ENCODE measurements at regions of chr3 and their contacts with region 1.

Region 1: GRCh38 chr3:45841757-45842491 is at the start of gene LZTFL1:
- DNase-seq: peak; percentile 96
- ATAC-seq: peak; percentile 90
- H3K4me3 ChIP-seq: peak within 1 kb of the TSS; percentile 65 to 95 (median 88)
- H3K4me3 Mint-ChIP-seq: peak within 1 kb of the TSS; percentile 98
- H3K27ac ChIP-seq: peak within 1 kb of the TSS; percentile 83 to 95
- H3K27ac Mint-ChIP-seq: peak within 1 kb of the TSS; percentile 97
- H3K4me1 ChIP-seq: peaks cover 12 to 16% of the 10 kb centered on the region in 2 donors
- H3K4me1 Mint-ChIP-seq: peaks cover 23% of the 10 kb centered on the region
- H3K27me3 ChIP-seq: no peaks in the 10 kb centered on the region
- H3K27me3 Mint-ChIP-seq: no peaks in the 10 kb centered on the region
- CTCF ChIP-seq: no peak
- total RNA-seq, gene LZTFL1: 17.8 and 18.4 TPM in 2 replicates

Region 2: GRCh38 chr3:45688882-45689756 is 152.8 kb before region 1 on chr3 and contains the start of gene SACM1L:
- CTCF ChIA-PET with region 1: no interaction called
- POLR2A ChIA-PET with region 1: no interaction called
- intact Hi-C with region 1: loop called (anchors 1 kb)
- DNase-seq: peak; percentile 99
- ATAC-seq: peak; percentile 85
- H3K4me3 ChIP-seq: peak within 1 kb of the TSS; percentile 69 to 96 (median 82)
- H3K4me3 Mint-ChIP-seq: peak within 1 kb of the TSS; percentile 93
- H3K27ac ChIP-seq: peak within 1 kb of the TSS; percentile 75 to 85
- H3K27ac Mint-ChIP-seq: peak within 1 kb of the TSS; percentile 99
- H3K4me1 ChIP-seq: peaks cover 38 to 44% of the 10 kb centered on the region in 2 donors
- H3K4me1 Mint-ChIP-seq: peaks cover 55% of the 10 kb centered on the region
- H3K27me3 ChIP-seq: no peaks in the 10 kb centered on the region
- H3K27me3 Mint-ChIP-seq: peaks cover 3% of the 10 kb centered on the region
- CTCF ChIP-seq: no peak
- total RNA-seq, gene SACM1L: 85.7 and 88.2 TPM in 2 replicates

Region 3: GRCh38 chr3:45890405-45890804 is 48.5 kb after region 1 on chr3:
- CTCF ChIA-PET with region 1: no interaction called
- POLR2A ChIA-PET with region 1: no interaction called
- intact Hi-C with region 1: loop called (anchors 5 kb)
- DNase-seq: peak; percentile 28
- ATAC-seq: no peak
- H3K4me3 ChIP-seq: peak overlapping the region in 1 of 5 experiments; percentile 13
- H3K4me3 Mint-ChIP-seq: peak overlapping the region; percentile 72
- H3K27ac ChIP-seq: peak overlapping the region; percentile 6 to 13
- H3K27ac Mint-ChIP-seq: no peak overlapping the region
- H3K4me1 ChIP-seq: peaks cover 52 to 63% of the 10 kb centered on the region in 2 donors
- H3K4me1 Mint-ChIP-seq: peaks cover 74% of the 10 kb centered on the region
- H3K27me3 ChIP-seq: no peaks in the 10 kb centered on the region
- H3K27me3 Mint-ChIP-seq: no peaks in the 10 kb centered on the region
- CTCF ChIP-seq: no peak

Region 4: GRCh38 chr3:45929042-45929679 is 87.2 kb after region 1 on chr3:
- CTCF ChIA-PET with region 1: no interaction called
- POLR2A ChIA-PET with region 1: no interaction called
- intact Hi-C with region 1: loop called (anchors 5 kb)
- DNase-seq: peak; percentile 70
- ATAC-seq: peak; percentile 81
- H3K4me3 ChIP-seq: no peak overlapping the region
- H3K4me3 Mint-ChIP-seq: no peak overlapping the region
- H3K27ac ChIP-seq: no peak overlapping the region
- H3K27ac Mint-ChIP-seq: no peak overlapping the region
- H3K4me1 ChIP-seq: no peaks in the 10 kb centered on the region
- H3K4me1 Mint-ChIP-seq: no peaks in the 10 kb centered on the region
- H3K27me3 ChIP-seq: no peaks in the 10 kb centered on the region
- H3K27me3 Mint-ChIP-seq: no peaks in the 10 kb centered on the region
- CTCF ChIP-seq: peak; percentile 81

Region 5: DNA sequence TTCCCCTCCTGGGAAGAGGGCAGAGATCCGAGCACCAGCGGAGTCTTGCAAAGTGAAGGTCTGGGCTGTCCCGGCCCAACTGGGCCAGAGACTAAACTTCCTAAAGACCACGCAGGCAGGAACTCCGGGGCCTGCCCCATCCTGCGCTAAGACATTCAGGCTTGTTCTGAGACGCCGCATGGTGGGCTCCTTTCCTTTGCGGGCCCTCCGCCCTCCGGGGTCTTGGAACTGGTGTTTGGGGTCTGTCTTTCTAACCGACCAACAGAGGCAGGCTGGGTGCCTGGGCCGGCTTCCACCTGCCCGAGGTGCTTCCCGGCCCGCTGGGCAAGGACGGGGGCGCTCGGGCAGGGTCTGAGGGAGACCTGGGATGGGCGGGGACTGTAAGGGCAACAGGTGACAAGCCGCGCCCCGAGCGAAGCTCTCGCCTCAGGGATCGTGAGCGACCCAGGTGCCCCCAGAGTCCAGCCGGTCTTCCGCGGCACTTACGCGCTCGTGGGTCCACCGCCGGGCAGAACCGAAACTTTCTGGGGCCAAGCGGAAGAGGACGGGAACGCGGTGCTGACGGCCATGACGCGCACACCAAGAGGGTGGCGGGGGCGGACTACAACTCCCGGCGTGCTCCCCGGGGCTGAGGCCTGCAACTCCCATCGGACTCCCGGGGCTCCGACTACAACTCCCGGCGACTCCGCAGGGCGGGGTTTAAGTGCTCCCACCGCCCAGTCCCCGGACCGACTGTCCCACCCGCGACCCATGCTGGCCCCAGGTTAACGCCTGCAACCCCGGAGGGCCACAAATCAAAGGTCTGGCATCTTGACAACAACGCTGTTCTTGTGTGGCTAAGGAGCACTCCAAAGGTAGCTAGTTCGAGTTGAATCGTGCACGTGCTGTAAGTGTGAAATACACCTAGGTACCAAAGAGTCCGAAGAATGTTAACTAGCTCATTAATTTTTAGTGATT is 153.6 kb after region 1 on chr3 and contains the start of gene FYCO1:
- CTCF ChIA-PET with region 1: no interaction called
- POLR2A ChIA-PET with region 1: no interaction called
- intact Hi-C with region 1: loop called (anchors 1 kb)
- DNase-seq: peak; percentile 91
- ATAC-seq: peak; percentile 95
- H3K4me3 ChIP-seq: peak within 1 kb of the TSS; percentile 62 to 98 (median 92)
- H3K4me3 Mint-ChIP-seq: peak within 1 kb of the TSS; percentile 89
- H3K27ac ChIP-seq: peak within 1 kb of the TSS; percentile 88 to 92
- H3K27ac Mint-ChIP-seq: peak within 1 kb of the TSS; percentile 92
- H3K4me1 ChIP-seq: peaks cover 25 to 49% of the 10 kb centered on the region in 2 donors
- H3K4me1 Mint-ChIP-seq: peaks cover 36% of the 10 kb centered on the region
- H3K27me3 ChIP-seq: peaks cover 0 to 4% (median 1%) of the 10 kb centered on the region in 4 experiments
- H3K27me3 Mint-ChIP-seq: no peaks in the 10 kb centered on the region
- CTCF ChIP-seq: no peak
- total RNA-seq, gene FYCO1: 16.5 and 16.7 TPM in 2 replicates